Heart left ventricle (tissue), 16 donors: ENCODE measurements at regions of chr12 and their contacts with region 1.

Region 1: DNA sequence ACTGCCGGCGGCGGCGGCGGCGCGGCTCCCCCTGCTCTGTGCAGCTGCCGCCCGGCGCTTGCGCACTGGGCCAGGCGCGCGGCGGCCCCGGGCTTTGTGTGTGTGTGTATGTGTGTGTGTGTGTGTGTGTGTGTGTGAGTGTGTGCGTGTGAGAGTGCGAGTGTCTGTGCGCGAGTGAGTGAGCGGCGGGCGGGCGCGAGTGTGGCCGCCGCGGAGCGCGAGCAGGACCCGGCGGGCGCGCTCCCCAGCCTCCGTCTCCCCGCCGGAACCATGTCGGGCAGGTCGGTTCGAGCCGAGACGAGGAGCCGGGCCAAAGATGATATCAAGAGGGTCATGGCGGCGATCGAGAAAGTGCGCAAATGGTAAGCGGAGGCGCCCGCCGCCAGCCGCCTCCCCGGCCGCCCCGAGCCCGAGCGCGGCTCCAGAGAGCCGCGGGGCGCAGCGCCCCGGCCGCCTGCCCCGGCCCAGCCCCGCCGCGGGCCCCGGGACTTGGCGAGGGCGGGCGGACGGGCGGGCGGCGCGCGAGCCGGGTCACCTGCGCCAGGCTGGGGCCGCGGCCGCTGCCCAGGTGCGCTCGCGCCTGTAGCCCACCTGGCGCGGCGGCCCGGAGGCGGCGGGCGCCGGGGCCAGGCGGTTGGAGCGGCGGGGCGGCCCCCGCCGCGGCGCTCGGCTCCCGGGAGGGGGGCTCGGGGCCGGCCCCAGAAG is at the start of gene BCL7A:
- DNase-seq: peak; percentile 66 to 81 (median 73)
- ATAC-seq: peak; percentile 57 to 84 (median 77)
- H3K4me3 ChIP-seq: peak within 1 kb of the TSS; percentile 42 to 88 (median 71)
- H3K27ac ChIP-seq: peak within 1 kb of the TSS; percentile 72 to 94 (median 81)
- H3K4me1 ChIP-seq: peaks cover 3 to 32% (median 16%) of the 10 kb centered on the region in 12 donors
- H3K27me3 ChIP-seq: peaks cover 0 to 11% (median 0%) of the 10 kb centered on the region in 9 donors
- CTCF ChIP-seq: no peak
- POLR2A ChIP-seq: no peak
- total RNA-seq, gene BCL7A: 11.4 to 22.1 (median 14.3) TPM

Region 2: GRCh38 chr12:121964813-121965643 is 56.9 kb before region 1 on chr12:
- intact Hi-C with region 1: loop called in 1 of 10 experiments (anchors 5 kb)
- DNase-seq: no peak
- ATAC-seq: peak in 1 of 4 donors; percentile 13
- H3K4me3 ChIP-seq: no peak overlapping the region
- H3K27ac ChIP-seq: no peak overlapping the region
- H3K4me1 ChIP-seq: peaks cover 0 to 15% (median 0%) of the 10 kb centered on the region in 12 donors
- H3K27me3 ChIP-seq: no peaks in the 10 kb centered on the region
- CTCF ChIP-seq: no peak
- POLR2A ChIP-seq: no peak